ENCODE measurements at regions of chr4 and their contacts with region 1.

Region 1: GRCh38 chr4:53377319-53378170 is at the start of gene FIP1L1:
- DNase-seq: peak; percentile 84 to 94
- ATAC-seq: peak; percentile 96 to 97
- H3K4me3 ChIP-seq: peak within 1 kb of the TSS; percentile 84 to 93 (median 90)
- H3K27ac ChIP-seq: peak within 1 kb of the TSS; percentile 85 to 87 (median 85)
- H3K4me1 ChIP-seq: peaks cover 13% of the 10 kb centered on the region in 2 donors
- H3K27me3 ChIP-seq: peaks cover 0 to 4% (median 0%) of the 10 kb centered on the region in 3 donors
- CTCF ChIP-seq: no peak
- POLR2A ChIP-seq: peak; percentile 77 to 84
- total RNA-seq, gene FIP1L1: 26.7 to 36.6 (median 31.1) TPM

Region 2: GRCh38 chr4:52861879-52862616 is 515.5 kb before region 1 on chr4 and contains the start of gene RASL11B:
- in situ Hi-C with region 1: loop called in 1 of 4 experiments (anchors 25 kb)
- intact Hi-C with region 1: no loop called
- DNase-seq: peak; percentile 53 to 70
- ATAC-seq: peak; percentile 96 to 98
- H3K4me3 ChIP-seq: peak within 1 kb of the TSS; percentile 63 to 80 (median 72)
- H3K27ac ChIP-seq: peak within 1 kb of the TSS; percentile 59 to 72 (median 60)
- H3K4me1 ChIP-seq: peaks cover 4 to 10% of the 10 kb centered on the region in 2 donors
- H3K27me3 ChIP-seq: no peaks in the 10 kb centered on the region
- CTCF ChIP-seq: peak in 3 of 5 experiments; percentile 31 to 64 (median 42)
- POLR2A ChIP-seq: peak; percentile 35 to 74
- total RNA-seq, gene RASL11B: 0.18 TPM in 1 of 4 donors, not detected in the others

Region 3: GRCh38 chr4:53365486-53366300 is 11.9 kb before region 1 on chr4 and contains the start of gene SCFD2:
- in situ Hi-C with region 1: no loop called
- intact Hi-C with region 1: loop called (anchors 1 kb)
- DNase-seq: peak; percentile 96
- ATAC-seq: peak; percentile 100
- H3K4me3 ChIP-seq: peak within 1 kb of the TSS; percentile 64 to 98 (median 88)
- H3K27ac ChIP-seq: peak within 1 kb of the TSS; percentile 56 to 78 (median 68)
- H3K4me1 ChIP-seq: peaks cover 16 to 23% of the 10 kb centered on the region in 2 donors
- H3K27me3 ChIP-seq: peaks cover 2 to 13% (median 5%) of the 10 kb centered on the region in 3 donors
- CTCF ChIP-seq: no peak
- POLR2A ChIP-seq: peak; percentile 22 to 51
- total RNA-seq, gene SCFD2: 8.9 to 16.0 (median 14.8) TPM

Region 4: DNA sequence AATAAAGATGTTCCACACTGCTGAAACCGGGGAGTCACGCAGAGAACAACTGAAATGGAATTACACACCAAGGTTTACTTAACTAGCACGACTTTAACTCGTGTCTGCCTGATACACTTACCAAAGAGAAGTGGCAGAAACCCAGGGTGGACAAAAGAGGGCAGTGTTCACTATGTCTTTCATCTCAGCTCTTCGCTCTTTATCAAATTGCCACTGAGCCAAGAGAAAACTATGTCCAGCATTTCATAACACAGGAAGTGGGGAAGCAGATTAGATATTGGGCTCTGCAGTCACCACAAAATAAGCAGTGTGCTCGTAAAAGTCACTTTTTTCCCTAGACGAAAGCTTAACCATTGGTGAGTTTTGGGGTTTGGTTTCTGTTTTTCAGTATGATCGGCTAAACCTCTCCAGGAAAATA is 531.1 kb after region 1 on chr4:
- in situ Hi-C with region 1: no loop called
- intact Hi-C with region 1: loop called (anchors 10 kb)
- DNase-seq: peak; percentile 10 to 25
- ATAC-seq: peak; percentile 86 to 96
- H3K4me3 ChIP-seq: peak overlapping the region in 1 of 4 donors; percentile 22
- H3K27ac ChIP-seq: peak overlapping the region in 1 of 4 donors; percentile 14
- H3K4me1 ChIP-seq: peaks cover 16% of the 10 kb centered on the region in 2 donors
- H3K27me3 ChIP-seq: no peaks in the 10 kb centered on the region
- CTCF ChIP-seq: peak; percentile 20 to 64 (median 53)
- POLR2A ChIP-seq: no peak

Region 5: DNA sequence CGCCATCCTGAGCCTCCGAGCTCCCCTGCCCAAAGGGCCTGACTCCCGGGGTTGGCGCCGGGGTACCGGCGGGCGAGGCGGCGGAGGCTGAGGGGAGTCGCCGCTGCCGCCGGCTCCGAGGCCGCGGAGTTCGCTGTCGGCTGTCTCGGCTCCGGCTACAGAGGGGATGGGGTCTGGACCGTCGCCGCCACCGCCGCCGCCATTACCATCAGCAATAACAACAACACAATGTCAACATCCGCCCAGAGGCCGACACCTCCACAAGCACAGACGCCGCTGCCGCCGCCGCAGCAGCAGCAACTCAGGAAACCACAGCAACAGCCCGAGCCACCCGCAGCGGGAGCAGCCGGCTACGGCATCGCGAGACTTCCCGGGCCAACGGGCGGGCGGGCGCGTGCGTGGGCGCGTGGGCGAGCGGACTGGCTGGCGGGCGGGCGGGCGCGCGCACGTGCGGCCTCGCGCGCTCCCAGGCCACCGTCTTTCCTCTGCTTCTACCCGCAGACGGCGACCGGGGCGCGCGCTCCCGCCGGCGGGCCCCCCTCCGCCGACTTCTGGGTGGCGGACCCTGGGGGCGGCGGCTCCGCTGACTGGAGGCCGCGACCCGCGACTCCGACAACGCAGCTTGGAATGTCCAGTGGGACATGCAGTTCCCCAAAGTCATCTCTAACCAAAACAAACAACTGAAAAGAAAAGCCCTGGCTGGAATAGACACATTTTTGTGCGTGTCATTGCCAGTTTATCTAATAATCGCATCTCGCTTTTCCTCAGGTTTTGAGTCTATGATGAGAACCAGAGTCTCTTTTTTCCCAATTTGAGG is 687.0 kb after region 1 on chr4 and contains the start of gene CHIC2:
- in situ Hi-C with region 1: no loop called
- intact Hi-C with region 1: loop called (anchors 5 kb)
- DNase-seq: peak; percentile 90 to 92
- ATAC-seq: peak; percentile 90 to 91
- H3K4me3 ChIP-seq: peak within 1 kb of the TSS; percentile 89 to 98 (median 94)
- H3K27ac ChIP-seq: peak within 1 kb of the TSS; percentile 83 to 94 (median 89)
- H3K4me1 ChIP-seq: peaks cover 45 to 46% of the 10 kb centered on the region in 2 donors
- H3K27me3 ChIP-seq: no peaks in the 10 kb centered on the region
- CTCF ChIP-seq: peak in 1 of 5 experiments; percentile 8
- POLR2A ChIP-seq: peak; percentile 93 to 98
- total RNA-seq, gene CHIC2: 11.9 to 18.6 (median 15.5) TPM

Measured in gastrocnemius medialis (tissue), 4 donors.